ENCODE measurements at regions of chr16 and their contacts with region 1.

Region 1: GRCh38 chr16:3400779-3401688 is at the starts of genes ZNF174 and ZSCAN32:
- DNase-seq: peak; percentile 99
- ATAC-seq: peak; percentile 99
- H3K4me3 Mint-ChIP-seq: peak within 1 kb of the TSS; percentile 82
- H3K27ac Mint-ChIP-seq: peak within 1 kb of the TSS; percentile 82
- H3K4me1 Mint-ChIP-seq: peaks cover 44% of the 10 kb centered on the region
- H3K27me3 Mint-ChIP-seq: no peaks in the 10 kb centered on the region
- CTCF ChIP-seq: no peak
- total RNA-seq, gene ZNF174: 6.7 to 6.9 TPM
- total RNA-seq, gene ZSCAN32: 13.2 to 15.6 TPM

Region 2: GRCh38 chr16:3305109-3306068 is 95.6 kb before region 1 on chr16 and contains the starts of genes TIGD7 and ZNF75A:
- CTCF ChIA-PET with region 1: interaction called, 4 read pairs
- POLR2A ChIA-PET with region 1: interaction called, 11 read pairs
- intact Hi-C with region 1: no loop called
- DNase-seq: peak; percentile 87
- ATAC-seq: peak; percentile 97
- H3K4me3 Mint-ChIP-seq: peak within 1 kb of the TSS; percentile 83
- H3K27ac Mint-ChIP-seq: peak within 1 kb of the TSS; percentile 90
- H3K4me1 Mint-ChIP-seq: peaks cover 23% of the 10 kb centered on the region
- H3K27me3 Mint-ChIP-seq: no peaks in the 10 kb centered on the region
- CTCF ChIP-seq: peak; percentile 19
- total RNA-seq, gene TIGD7: 4.0 to 4.7 TPM
- total RNA-seq, gene ZNF75A: 21.2 to 21.7 TPM

Region 3: GRCh38 chr16:3443108-3444031 is 42.3 kb after region 1 on chr16 and contains the starts of genes NAA60 and ZNF597:
- CTCF ChIA-PET with region 1: interaction called, 8 read pairs
- POLR2A ChIA-PET with region 1: interaction called, 14 read pairs
- intact Hi-C with region 1: no loop called
- DNase-seq: peak; percentile 87
- ATAC-seq: peak; percentile 89
- H3K4me3 Mint-ChIP-seq: peak within 1 kb of the TSS; percentile 98
- H3K27ac Mint-ChIP-seq: peak within 1 kb of the TSS; percentile 97
- H3K4me1 Mint-ChIP-seq: peaks cover 20% of the 10 kb centered on the region
- H3K27me3 Mint-ChIP-seq: no peaks in the 10 kb centered on the region
- CTCF ChIP-seq: no peak
- total RNA-seq, gene NAA60: 24.6 TPM
- total RNA-seq, gene ZNF597: 1.6 to 1.8 TPM

Region 4: DNA sequence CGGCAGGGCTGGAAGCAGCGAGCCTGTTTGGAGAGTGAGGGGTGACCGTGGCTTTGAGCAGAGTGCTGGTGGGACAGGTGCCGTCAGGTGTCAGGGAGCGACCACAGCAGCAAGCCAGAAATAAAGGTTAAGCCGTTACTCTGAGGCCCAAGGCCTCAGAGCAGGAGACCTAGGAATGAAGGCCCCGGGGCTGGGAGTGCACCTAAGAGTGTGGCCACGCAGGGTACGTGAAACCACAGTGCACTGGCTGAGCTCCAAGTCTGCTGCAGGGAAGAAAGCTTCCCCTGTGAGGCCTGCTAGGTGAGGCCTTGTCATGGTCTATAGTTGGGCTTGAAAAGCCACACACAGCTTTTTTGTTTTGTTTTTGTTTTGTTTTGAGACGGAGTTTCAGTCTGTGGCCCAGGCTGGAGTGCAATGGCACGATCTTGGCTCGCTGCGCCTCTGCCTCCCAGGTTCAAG is 108.5 kb after region 1 on chr16:
- CTCF ChIA-PET with region 1: no interaction called
- POLR2A ChIA-PET with region 1: no interaction called
- intact Hi-C with region 1: no loop called
- DNase-seq: peak; percentile 92
- ATAC-seq: peak; percentile 89
- H3K4me3 Mint-ChIP-seq: no peak overlapping the region
- H3K27ac Mint-ChIP-seq: peak overlapping the region; percentile 86
- H3K4me1 Mint-ChIP-seq: peaks cover 56% of the 10 kb centered on the region
- H3K27me3 Mint-ChIP-seq: no peaks in the 10 kb centered on the region
- CTCF ChIP-seq: no peak

Measured in activated CD8-positive, alpha-beta T cell treated with anti-CD3 and anti-CD28 coated beads for 36 hours (primary cell).